Transverse colon (tissue), 4 donors: ENCODE measurements at regions of chr10 and their contacts with region 1.

Region 1: GRCh38 chr10:124127965-124128827 is 34.8 kb upstream of the CHST15 start:
- DNase-seq: no peak
- H3K4me3 ChIP-seq: no peak overlapping the region
- H3K27ac ChIP-seq: no peak overlapping the region
- H3K4me1 ChIP-seq: no peaks in the 10 kb centered on the region
- H3K27me3 ChIP-seq: no peaks in the 10 kb centered on the region
- CTCF ChIP-seq: no peak
- EP300 ChIP-seq: no peak
- POLR2A ChIP-seq: no peak

Region 2: GRCh38 chr10:124145109-124145870 is 17.1 kb after region 1 on chr10:
- in situ Hi-C with region 1: no loop called
- intact Hi-C with region 1: loop called (anchors 1 kb)
- DNase-seq: peak; percentile 46
- H3K4me3 ChIP-seq: no peak overlapping the region
- H3K27ac ChIP-seq: peak overlapping the region; percentile 21 to 51 (median 47)
- H3K4me1 ChIP-seq: peaks cover 0 to 18% (median 11%) of the 10 kb centered on the region in 4 donors
- H3K27me3 ChIP-seq: no peaks in the 10 kb centered on the region
- CTCF ChIP-seq: no peak
- EP300 ChIP-seq: no peak
- POLR2A ChIP-seq: no peak

Region 3: GRCh38 chr10:124221356-124222317 is 93.4 kb after region 1 on chr10:
- in situ Hi-C with region 1: no loop called
- intact Hi-C with region 1: no loop called
- DNase-seq: peak; percentile 49
- H3K4me3 ChIP-seq: no peak overlapping the region
- H3K27ac ChIP-seq: peak overlapping the region in 2 of 4 donors; percentile 31 to 52
- H3K4me1 ChIP-seq: peaks cover 0 to 8% (median 0%) of the 10 kb centered on the region in 4 donors
- H3K27me3 ChIP-seq: no peaks in the 10 kb centered on the region
- CTCF ChIP-seq: no peak
- EP300 ChIP-seq: no peak
- POLR2A ChIP-seq: no peak